ENCODE measurements at regions of chr1 and their contacts with region 1.

Region 1: DNA sequence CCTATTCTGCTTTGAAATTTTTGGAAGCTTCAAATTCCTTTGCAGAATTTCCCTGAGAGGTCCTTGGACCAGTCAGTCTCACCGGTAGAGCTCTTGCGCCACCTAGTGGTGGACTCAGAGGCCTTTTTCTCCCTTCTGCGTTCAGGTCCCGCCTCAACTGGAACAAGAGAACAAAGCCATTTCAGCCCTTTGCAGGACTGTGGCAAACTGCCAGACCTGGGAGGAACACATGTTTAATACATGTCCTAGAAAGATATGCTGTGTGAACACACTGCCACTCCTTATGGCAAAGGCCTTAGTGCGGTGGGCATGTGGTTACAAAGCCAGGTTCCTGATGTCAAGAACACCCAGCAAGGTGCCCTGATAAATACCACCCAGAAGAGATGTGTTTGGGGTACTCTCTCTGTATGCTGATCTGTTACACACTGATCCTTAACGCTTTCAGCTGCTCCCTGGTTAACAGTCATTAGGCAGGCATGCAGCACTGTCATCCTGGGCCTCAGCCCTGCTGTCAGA is 82.2 kb upstream of the SSX2IP start:
- DNase-seq: peak; percentile 65 to 84
- H3K4me3 ChIP-seq: no peak overlapping the region
- H3K27ac ChIP-seq: no peak overlapping the region
- H3K4me1 ChIP-seq: no peaks in the 10 kb centered on the region
- H3K27me3 ChIP-seq: no peaks in the 10 kb centered on the region
- CTCF ChIP-seq: peak; percentile 84 to 93

Region 2: DNA sequence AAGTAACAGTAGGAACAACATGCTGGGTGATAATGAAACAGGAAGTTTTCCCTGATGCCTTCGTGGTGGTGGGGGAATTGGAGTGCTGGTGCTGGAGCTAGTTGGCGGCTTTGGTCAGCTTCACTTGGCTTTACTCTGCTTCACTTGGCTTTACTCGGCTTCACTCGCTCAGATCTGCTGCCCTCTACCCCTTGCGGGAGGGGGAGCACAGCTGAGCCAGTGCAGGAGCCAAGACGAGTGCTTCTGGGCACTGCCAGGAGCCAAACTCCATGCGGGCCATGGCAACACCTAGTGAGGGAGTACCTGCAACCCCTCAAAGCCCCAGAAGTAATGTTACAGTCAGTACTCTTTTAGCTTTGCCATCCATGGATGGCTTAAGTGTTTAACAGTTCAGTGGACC is 639.0 kb before region 1 on chr1:
- intact Hi-C with region 1: loop called (anchors 10 kb)
- DNase-seq: no peak
- H3K4me3 ChIP-seq: no peak overlapping the region
- H3K27ac ChIP-seq: no peak overlapping the region
- H3K4me1 ChIP-seq: no peaks in the 10 kb centered on the region
- H3K27me3 ChIP-seq: no peaks in the 10 kb centered on the region
- CTCF ChIP-seq: no peak

Region 3: GRCh38 chr1:84653130-84653677 is 119.3 kb before region 1 on chr1:
- intact Hi-C with region 1: loop called (anchors 10 kb)
- DNase-seq: no peak
- H3K4me3 ChIP-seq: no peak overlapping the region
- H3K27ac ChIP-seq: no peak overlapping the region
- H3K4me1 ChIP-seq: no peaks in the 10 kb centered on the region
- H3K27me3 ChIP-seq: no peaks in the 10 kb centered on the region
- CTCF ChIP-seq: no peak

Measured in tibial artery (tissue), 4 donors.